PC-9 (cell line): ENCODE measurements at regions of chr5 and their contacts with region 1.

Region 1: DNA sequence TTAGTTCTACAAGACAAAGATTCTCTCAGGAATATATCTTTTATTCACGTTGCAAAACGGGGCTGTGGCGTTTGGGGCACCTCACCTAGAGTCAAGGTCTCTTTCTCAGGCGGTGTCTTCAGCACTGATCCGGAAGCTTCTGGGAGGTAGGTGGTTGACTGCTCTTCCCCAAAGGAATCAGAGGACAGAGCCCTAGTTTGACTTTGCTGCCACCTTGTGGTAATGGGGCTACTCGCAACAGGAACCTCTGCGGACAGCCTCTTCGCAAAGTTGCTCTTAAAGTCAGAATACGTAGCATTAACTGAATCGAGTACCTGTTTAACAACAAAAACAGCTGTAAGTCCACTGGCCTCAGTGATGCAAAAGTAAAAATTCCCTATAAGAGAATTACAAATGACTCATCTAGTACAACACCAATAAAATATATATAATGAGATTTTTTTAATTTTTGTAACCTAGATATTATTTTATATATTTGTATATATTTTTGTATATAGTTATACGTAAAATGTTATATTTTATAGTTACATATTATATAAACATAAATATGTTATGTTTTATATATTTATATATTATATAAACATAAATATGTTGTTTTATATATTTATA is 13.3 kb upstream of the GPX8 start:
- DNase-seq: peak; percentile 68 to 70
- H3K4me3 ChIP-seq: no peak overlapping the region
- H3K27ac ChIP-seq: no peak overlapping the region
- H3K4me1 ChIP-seq: no peaks in the 10 kb centered on the region
- H3K27me3 ChIP-seq: peaks cover 7% of the 10 kb centered on the region
- CTCF ChIP-seq: peak; percentile 92

Region 2: GRCh38 chr5:54243473-54244080 is 903.1 kb before region 1 on chr5:
- CTCF ChIA-PET with region 1: interaction called, 4 read pairs
- POLR2A ChIA-PET with region 1: no interaction called
- intact Hi-C with region 1: loop called (anchors 5 kb)
- DNase-seq: peak in 1 of 2 experiments; percentile 1
- H3K4me3 ChIP-seq: no peak overlapping the region
- H3K27ac ChIP-seq: no peak overlapping the region
- H3K4me1 ChIP-seq: no peaks in the 10 kb centered on the region
- H3K27me3 ChIP-seq: no peaks in the 10 kb centered on the region
- CTCF ChIP-seq: peak; percentile 82

Region 3: DNA sequence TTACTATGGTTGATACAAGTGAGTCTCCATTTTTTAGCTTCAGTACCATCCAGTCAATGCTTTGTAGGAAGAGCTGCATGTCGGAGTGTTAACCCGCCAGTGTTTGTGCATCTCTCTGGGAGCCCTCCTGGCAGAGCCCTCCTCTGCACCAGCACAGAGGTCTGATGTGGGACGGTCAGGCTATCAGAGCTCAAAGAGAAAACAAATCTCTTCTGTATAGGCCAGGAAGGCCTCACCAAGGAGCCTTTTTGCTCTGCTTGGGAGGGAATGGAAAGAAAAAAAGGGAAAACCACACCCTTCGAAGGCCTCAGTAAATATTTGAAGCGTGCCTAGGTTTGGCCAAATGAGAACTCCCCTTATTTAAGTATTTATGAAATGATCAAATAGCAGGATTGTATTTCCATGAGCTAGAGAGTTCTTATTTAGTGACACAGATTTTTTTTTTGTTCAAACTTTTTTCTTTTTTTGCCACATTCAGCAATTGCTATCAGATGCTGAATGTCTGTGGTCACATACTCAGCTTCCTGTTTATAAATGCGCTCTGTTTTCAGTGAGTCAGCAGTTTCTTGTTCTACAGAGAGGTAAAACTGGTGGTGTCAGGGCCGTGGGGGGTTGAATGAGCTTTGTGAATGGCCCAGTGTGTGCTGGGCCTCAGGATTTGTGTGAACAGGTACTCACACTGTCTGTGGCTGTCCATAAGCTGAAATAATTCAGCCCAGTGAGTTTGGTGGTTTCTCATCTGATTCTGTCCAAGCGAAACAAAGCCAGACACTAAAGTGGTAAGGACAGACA is 402.5 kb before region 1 on chr5:
- CTCF ChIA-PET with region 1: no interaction called
- POLR2A ChIA-PET with region 1: no interaction called
- intact Hi-C with region 1: no loop called
- DNase-seq: peak; percentile 52 to 95
- H3K4me3 ChIP-seq: no peak overlapping the region
- H3K27ac ChIP-seq: peak overlapping the region; percentile 88
- H3K4me1 ChIP-seq: peaks cover 52% of the 10 kb centered on the region
- H3K27me3 ChIP-seq: no peaks in the 10 kb centered on the region
- CTCF ChIP-seq: no peak

Region 4: DNA sequence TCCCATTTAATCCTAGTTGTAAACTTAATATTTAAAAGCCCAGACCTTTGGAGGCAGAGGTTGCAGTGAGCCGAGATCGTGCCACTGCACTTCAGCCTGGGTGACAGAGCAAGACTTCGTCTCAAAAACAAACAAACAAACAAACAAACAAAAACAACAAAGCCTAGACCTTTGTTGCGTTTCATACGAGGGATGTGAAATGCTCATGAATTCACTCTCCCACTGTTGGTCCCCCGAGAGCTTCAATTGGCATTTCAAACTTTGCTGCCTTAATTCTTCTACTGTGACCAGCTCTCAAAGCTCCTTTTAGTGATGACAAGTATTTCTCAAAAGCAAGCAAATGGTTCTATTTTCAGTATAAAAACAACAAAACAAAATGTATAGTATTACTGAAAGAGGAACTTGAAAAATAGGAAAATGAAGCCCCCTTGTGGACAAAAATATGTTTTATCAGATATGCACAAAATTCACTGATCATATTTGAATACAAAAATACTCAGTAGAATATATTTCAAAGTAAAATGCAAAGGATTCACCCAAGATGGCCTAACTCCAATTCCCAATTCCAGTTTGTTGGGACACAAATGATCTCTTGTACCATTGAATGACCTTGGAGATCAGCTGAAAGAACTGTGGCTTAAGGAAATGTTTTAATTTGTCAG is 301.6 kb before region 1 on chr5:
- CTCF ChIA-PET with region 1: no interaction called
- POLR2A ChIA-PET with region 1: no interaction called
- intact Hi-C with region 1: loop called (anchors 5 kb)
- DNase-seq: peak in 1 of 2 experiments; percentile 42
- H3K4me3 ChIP-seq: no peak overlapping the region
- H3K27ac ChIP-seq: no peak overlapping the region
- H3K4me1 ChIP-seq: no peaks in the 10 kb centered on the region
- H3K27me3 ChIP-seq: no peaks in the 10 kb centered on the region
- CTCF ChIP-seq: peak; percentile 88

Region 5: GRCh38 chr5:54905943-54906537 is 240.6 kb before region 1 on chr5:
- CTCF ChIA-PET with region 1: no interaction called
- POLR2A ChIA-PET with region 1: no interaction called
- intact Hi-C with region 1: loop called (anchors 1 kb)
- DNase-seq: peak in 1 of 2 experiments; percentile 42
- H3K4me3 ChIP-seq: no peak overlapping the region
- H3K27ac ChIP-seq: no peak overlapping the region
- H3K4me1 ChIP-seq: no peaks in the 10 kb centered on the region
- H3K27me3 ChIP-seq: peaks cover 4% of the 10 kb centered on the region; the same call in 1 of the 2 replicates
- CTCF ChIP-seq: peak; percentile 77

Region 6: GRCh38 chr5:54944364-54944763 is 202.3 kb before region 1 on chr5:
- CTCF ChIA-PET with region 1: interaction called, 5 read pairs
- POLR2A ChIA-PET with region 1: no interaction called
- intact Hi-C with region 1: loop called (anchors 2 kb)
- DNase-seq: no peak
- H3K4me3 ChIP-seq: no peak overlapping the region
- H3K27ac ChIP-seq: no peak overlapping the region
- H3K4me1 ChIP-seq: no peaks in the 10 kb centered on the region
- H3K27me3 ChIP-seq: no peaks in the 10 kb centered on the region; the same call in 1 of the 2 replicates
- CTCF ChIP-seq: peak; percentile 76